ENCODE measurements at regions of chr13 and their contacts with region 1.

Region 1: GRCh38 chr13:28138012-28138755 is at the start of gene PAN3:
- DNase-seq: peak; percentile 83 to 96 (median 93)
- ATAC-seq: peak; percentile 54
- H3K4me3 ChIP-seq: peak within 1 kb of the TSS; percentile 67 to 80
- H3K4me3 Mint-ChIP-seq: peak within 1 kb of the TSS; percentile 97
- H3K27ac ChIP-seq: peak within 1 kb of the TSS; percentile 90 to 97
- H3K27ac Mint-ChIP-seq: peak within 1 kb of the TSS; percentile 98
- H3K4me1 ChIP-seq: peaks cover 35% of the 10 kb centered on the region
- H3K4me1 Mint-ChIP-seq: peaks cover 52% of the 10 kb centered on the region
- H3K27me3 ChIP-seq: no peaks in the 10 kb centered on the region
- H3K27me3 Mint-ChIP-seq: no peaks in the 10 kb centered on the region
- CTCF ChIP-seq: no peak
- total RNA-seq, gene PAN3: 55.8 to 55.9 TPM

Region 2: GRCh38 chr13:27424246-27425157 is 713.7 kb before region 1 on chr13 and contains the start of gene GTF3A:
- CTCF ChIA-PET with region 1: no interaction called
- POLR2A ChIA-PET with region 1: no interaction called
- intact Hi-C with region 1: loop called (anchors 2 to 5 kb)
- DNase-seq: peak; percentile 74 to 95 (median 87)
- ATAC-seq: peak; percentile 57
- H3K4me3 ChIP-seq: peak within 1 kb of the TSS; percentile 76 to 83
- H3K4me3 Mint-ChIP-seq: peak within 1 kb of the TSS; percentile 82
- H3K27ac ChIP-seq: peak within 1 kb of the TSS; percentile 85 to 95
- H3K27ac Mint-ChIP-seq: peak within 1 kb of the TSS; percentile 97
- H3K4me1 ChIP-seq: peaks cover 43% of the 10 kb centered on the region
- H3K4me1 Mint-ChIP-seq: peaks cover 48% of the 10 kb centered on the region
- H3K27me3 ChIP-seq: no peaks in the 10 kb centered on the region
- H3K27me3 Mint-ChIP-seq: no peaks in the 10 kb centered on the region
- CTCF ChIP-seq: no peak
- total RNA-seq, gene GTF3A: 157 TPM

Region 3: DNA sequence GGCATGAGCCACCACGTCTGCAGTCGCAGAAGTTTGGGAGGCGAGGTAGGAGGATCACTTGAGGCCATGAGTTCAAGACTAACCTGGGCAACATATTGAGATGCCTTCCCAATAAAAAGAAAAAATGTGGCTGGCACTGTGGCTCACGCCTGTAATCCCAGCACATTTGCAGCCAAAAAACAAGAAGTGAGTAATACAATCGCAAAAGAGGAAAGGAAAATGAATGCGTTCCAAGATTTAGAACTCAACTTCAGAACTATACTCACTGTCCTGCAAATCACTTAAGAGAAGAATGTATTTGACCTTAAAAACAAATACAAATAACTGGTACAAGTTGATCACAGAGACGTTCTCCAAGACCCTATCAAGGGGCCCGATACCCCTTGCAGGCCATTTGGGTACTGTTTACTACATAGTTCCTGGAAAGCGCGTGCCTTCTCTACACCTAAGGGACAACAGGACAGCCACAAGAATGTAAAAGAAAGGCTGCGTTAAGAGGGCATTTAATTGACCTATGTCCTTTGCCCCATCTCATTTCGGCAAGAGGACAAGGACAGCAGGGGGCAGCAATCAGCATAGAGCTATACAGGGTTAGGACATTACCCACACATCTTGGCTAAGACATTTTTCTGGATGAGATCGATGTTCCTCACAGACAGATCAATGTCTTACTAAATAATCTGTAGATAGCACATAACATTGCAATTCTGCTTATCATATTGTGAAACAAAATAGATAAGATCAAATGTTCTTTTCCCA is 79.1 kb before region 1 on chr13:
- CTCF ChIA-PET with region 1: no interaction called
- POLR2A ChIA-PET with region 1: no interaction called
- intact Hi-C with region 1: loop called in 1 of 2 experiments (anchors 5 kb)
- DNase-seq: peak in 8 of 9 experiments; percentile 15 to 55 (median 40)
- ATAC-seq: no peak
- H3K4me3 ChIP-seq: no peak overlapping the region
- H3K4me3 Mint-ChIP-seq: no peak overlapping the region
- H3K27ac ChIP-seq: no peak overlapping the region
- H3K27ac Mint-ChIP-seq: no peak overlapping the region
- H3K4me1 ChIP-seq: no peaks in the 10 kb centered on the region
- H3K4me1 Mint-ChIP-seq: no peaks in the 10 kb centered on the region
- H3K27me3 ChIP-seq: no peaks in the 10 kb centered on the region
- H3K27me3 Mint-ChIP-seq: peaks cover 18% of the 10 kb centered on the region
- CTCF ChIP-seq: peak; percentile 21

Region 4: DNA sequence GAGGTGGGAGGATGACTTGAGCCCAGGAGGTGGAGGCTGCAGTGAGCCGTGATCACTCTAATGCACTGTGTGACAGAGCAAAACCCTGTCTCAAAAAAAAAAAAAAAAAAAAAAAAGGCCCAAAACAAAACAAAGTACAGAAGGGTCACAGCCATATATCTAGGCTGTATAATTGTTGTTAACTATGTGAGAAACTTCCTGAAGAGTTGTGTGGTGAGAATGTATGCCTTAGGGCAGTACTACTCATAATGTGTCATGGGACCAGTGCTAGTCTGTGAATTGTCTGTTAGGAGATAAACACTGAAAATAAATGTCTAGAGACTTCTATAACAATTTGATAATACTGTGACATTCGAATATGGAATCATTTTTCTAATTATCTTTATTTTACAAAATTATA is 43.2 kb after region 1 on chr13:
- CTCF ChIA-PET with region 1: no interaction called
- POLR2A ChIA-PET with region 1: interaction called, 6 read pairs
- intact Hi-C with region 1: loop called in 1 of 2 experiments (anchors 5 kb)
- DNase-seq: no peak
- ATAC-seq: no peak
- H3K4me3 ChIP-seq: no peak overlapping the region
- H3K4me3 Mint-ChIP-seq: no peak overlapping the region
- H3K27ac ChIP-seq: no peak overlapping the region
- H3K27ac Mint-ChIP-seq: no peak overlapping the region
- H3K4me1 ChIP-seq: no peaks in the 10 kb centered on the region
- H3K4me1 Mint-ChIP-seq: peaks cover 53% of the 10 kb centered on the region
- H3K27me3 ChIP-seq: no peaks in the 10 kb centered on the region
- H3K27me3 Mint-ChIP-seq: no peaks in the 10 kb centered on the region
- CTCF ChIP-seq: no peak

Region 5: DNA sequence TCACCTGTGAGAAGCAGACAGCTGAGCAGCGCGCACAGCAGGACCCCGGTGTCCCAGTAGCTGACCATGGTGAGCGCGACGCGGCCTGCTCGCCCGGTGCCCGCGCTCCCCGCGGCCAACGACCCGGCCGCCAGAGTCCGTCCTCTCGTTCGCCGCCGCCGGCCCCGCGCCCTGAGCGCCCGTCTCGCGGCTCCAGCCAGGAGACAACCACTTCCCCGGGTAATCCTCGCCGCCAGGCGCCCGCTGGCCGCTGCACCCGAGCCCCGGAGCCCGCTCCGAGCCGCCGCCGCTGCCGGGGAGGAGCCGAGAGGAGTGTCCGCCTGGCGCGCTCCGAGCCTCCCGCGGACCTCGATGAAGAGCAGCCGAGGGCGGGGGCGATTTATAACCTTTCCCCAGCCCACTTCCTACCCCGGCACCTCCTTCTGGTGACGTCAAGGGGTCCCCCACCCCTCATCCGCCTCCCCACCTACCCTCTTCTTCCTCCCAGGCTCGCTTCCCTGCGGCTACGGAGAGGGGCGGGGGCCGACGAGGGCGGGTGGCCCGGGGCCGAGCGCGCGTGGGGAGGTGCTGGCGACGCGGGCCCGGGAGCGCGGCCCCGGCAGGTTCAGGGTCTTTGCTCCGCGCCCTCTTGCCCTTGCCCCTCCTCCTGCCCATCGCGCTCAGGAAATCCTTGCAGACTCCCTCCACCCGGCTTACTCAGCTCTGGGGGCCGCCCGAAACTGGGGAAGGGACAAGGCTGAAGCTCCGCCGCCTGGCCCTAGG is 356.8 kb after region 1 on chr13 and contains the start of gene FLT1:
- CTCF ChIA-PET with region 1: no interaction called
- POLR2A ChIA-PET with region 1: no interaction called
- intact Hi-C with region 1: loop called in 1 of 2 experiments (anchors 2 kb)
- DNase-seq: peak in 5 of 9 experiments; percentile 27 to 62 (median 54)
- ATAC-seq: peak; percentile 21
- H3K4me3 ChIP-seq: peak within 1 kb of the TSS; percentile 45 to 46
- H3K4me3 Mint-ChIP-seq: peak within 1 kb of the TSS; percentile 62
- H3K27ac ChIP-seq: no peak within 1 kb of the TSS
- H3K27ac Mint-ChIP-seq: peak within 1 kb of the TSS; percentile 8
- H3K4me1 ChIP-seq: peaks cover 26% of the 10 kb centered on the region
- H3K4me1 Mint-ChIP-seq: peaks cover 38% of the 10 kb centered on the region
- H3K27me3 ChIP-seq: peaks cover 5 to 6% of the 10 kb centered on the region in 2 experiments
- H3K27me3 Mint-ChIP-seq: peaks cover 22% of the 10 kb centered on the region
- CTCF ChIP-seq: no peak
- total RNA-seq, gene FLT1: 1.4 to 1.5 TPM

Region 6: DNA sequence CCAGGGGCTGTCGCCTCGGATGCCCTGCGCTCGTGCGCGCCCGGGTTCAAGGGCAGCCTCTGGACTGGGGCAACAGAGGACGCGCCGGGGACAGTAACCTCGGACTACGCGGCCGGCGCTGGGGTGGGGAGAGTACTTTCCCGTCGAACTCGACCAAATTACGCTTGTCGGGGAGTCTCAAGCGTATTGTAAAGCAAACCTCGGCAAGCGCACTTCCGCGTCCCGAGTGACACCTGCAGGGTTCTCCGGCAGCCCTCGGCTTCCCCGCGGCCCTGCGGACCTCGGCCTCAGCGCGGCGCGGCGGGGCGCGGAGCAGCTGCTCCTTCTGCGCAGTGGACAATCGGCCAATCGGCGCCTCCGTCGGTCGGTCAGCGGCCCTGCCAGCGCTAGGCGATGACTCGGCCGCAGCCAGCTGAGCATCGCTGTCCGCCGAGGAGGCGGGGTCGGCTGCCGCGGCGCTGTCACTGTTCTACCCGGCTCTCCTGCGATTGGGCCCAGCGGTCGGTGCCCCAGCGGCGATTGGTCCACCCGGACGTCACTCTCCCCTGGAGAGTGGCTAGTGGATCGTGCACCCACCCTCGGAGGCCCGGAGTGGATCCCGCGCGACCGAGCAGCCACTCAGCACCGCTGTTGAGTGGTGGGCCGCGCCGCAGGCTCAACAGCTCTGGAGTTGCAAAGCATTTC is 580.5 kb after region 1 on chr13 and contains the start of gene SLC46A3:
- CTCF ChIA-PET with region 1: no interaction called
- POLR2A ChIA-PET with region 1: no interaction called
- intact Hi-C with region 1: loop called (anchors 1 to 5 kb)
- DNase-seq: peak; percentile 94 to 99 (median 97)
- ATAC-seq: peak; percentile 98
- H3K4me3 ChIP-seq: peak within 1 kb of the TSS; percentile 94 to 97
- H3K4me3 Mint-ChIP-seq: peak within 1 kb of the TSS; percentile 93
- H3K27ac ChIP-seq: peak within 1 kb of the TSS; percentile 88 to 91
- H3K27ac Mint-ChIP-seq: peak within 1 kb of the TSS; percentile 97
- H3K4me1 ChIP-seq: peaks cover 22% of the 10 kb centered on the region
- H3K4me1 Mint-ChIP-seq: peaks cover 40% of the 10 kb centered on the region
- H3K27me3 ChIP-seq: no peaks in the 10 kb centered on the region
- H3K27me3 Mint-ChIP-seq: no peaks in the 10 kb centered on the region
- CTCF ChIP-seq: no peak
- total RNA-seq, gene SLC46A3: 5.9 TPM

Measured in CD8-positive, alpha-beta T cell (primary cell).